BJ (cell line): ENCODE measurements at regions of chr21 and their contacts with region 1.

Region 1: GRCh38 chr21:28436286-28436932 is 556.3 kb downstream of the LTN1 start:
- DNase-seq: no peak
- H3K4me3 ChIP-seq: no peak overlapping the region
- H3K27me3 ChIP-seq: no peaks in the 10 kb centered on the region
- CTCF ChIP-seq: no peak

Region 2: GRCh38 chr21:28464095-28464494 is 27.7 kb after region 1 on chr21:
- CTCF ChIA-PET with region 1: no interaction called
- POLR2A ChIA-PET with region 1: no interaction called
- DNase-seq: no peak
- H3K4me3 ChIP-seq: no peak overlapping the region
- H3K27me3 ChIP-seq: no peaks in the 10 kb centered on the region
- CTCF ChIP-seq: no peak

Region 3: DNA sequence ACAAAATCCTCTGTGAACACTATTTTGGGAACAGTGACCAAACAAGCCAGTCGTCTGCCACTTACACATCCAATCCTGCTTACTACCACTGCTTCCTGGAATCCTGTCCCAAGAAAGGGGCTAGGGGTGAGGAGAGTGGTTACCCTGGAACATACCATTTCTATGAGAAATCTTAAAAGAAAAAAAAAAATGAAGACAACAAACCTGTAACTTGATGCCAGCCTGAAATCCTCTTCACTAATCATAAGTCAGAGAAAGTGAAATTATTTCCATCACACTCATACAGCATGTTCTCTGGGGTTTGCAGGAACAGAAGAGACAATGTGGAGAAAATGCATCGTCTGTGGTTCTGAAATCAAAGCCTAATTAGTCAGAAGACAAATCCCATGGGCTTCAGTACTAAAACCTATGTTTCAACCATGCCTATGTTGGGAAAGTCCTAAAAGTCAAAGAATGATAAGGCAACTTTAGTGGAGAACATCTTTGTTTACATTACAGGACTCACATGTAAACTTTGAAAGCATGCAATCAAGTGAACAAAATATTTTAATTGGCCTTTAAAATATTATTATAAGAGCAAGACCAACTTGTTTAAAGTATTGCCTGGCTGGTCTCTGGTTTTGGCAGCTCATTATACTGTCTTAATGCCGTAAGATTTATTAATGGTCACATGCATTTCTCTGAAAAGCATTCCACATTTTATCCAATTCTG is 335.5 kb after region 1 on chr21:
- CTCF ChIA-PET with region 1: no interaction called
- POLR2A ChIA-PET with region 1: interaction called, 11 read pairs
- DNase-seq: peak; percentile 80
- H3K4me3 ChIP-seq: peak overlapping the region; percentile 3; the same call in 1 of the 2 replicates
- H3K27me3 ChIP-seq: no peaks in the 10 kb centered on the region
- CTCF ChIP-seq: no peak